Dorsolateral prefrontal cortex (tissue), 120 donors: ENCODE measurements at regions of chr13 and their contacts with region 1.

Region 1: DNA sequence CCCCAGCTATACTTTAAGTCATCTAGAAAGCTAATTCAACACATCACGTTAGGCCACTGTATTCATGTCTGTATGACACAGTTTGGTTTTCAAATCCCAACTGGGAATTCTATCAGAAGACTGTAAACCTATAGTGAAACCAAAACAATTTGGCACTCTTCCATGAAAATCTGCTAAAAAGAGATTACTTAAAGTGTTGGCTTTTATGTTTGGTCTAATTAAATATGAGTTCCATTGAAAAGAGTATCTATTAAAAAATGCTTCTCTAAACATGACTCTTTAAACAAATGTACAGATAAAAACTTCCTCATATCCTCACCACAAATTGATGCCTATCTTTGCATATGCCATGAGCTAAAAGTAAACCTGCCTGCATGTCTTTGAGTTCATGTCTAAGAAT is 25.4 kb downstream of the PCDH9 start:
- DNase-seq: no peak
- H3K4me3 ChIP-seq: peak overlapping the region in 5 of 59 donors; percentile 4 to 27 (median 8)
- H3K27ac ChIP-seq: peak overlapping the region in 27 of 59 donors; percentile 4 to 66 (median 23)
- H3K27me3 ChIP-seq: no peaks in the 10 kb centered on the region
- CTCF ChIP-seq: no peak

Region 2: GRCh38 chr13:67061750-67062149 is 143.0 kb before region 1 on chr13:
- intact Hi-C with region 1: no loop called
- DNase-seq: no peak
- H3K4me3 ChIP-seq: peak overlapping the region in 41 of 59 donors; percentile 1 to 51 (median 21)
- H3K27ac ChIP-seq: peak overlapping the region in 58 of 59 donors; percentile 14 to 100 (median 80)
- H3K27me3 ChIP-seq: no peaks in the 10 kb centered on the region
- CTCF ChIP-seq: no peak

Region 3: GRCh38 chr13:67119481-67119883 is 85.3 kb before region 1 on chr13:
- intact Hi-C with region 1: no loop called
- DNase-seq: no peak
- H3K4me3 ChIP-seq: peak overlapping the region in 3 of 59 donors; percentile 1 to 15 (median 8)
- H3K27ac ChIP-seq: peak overlapping the region in 52 of 59 donors; percentile 7 to 88 (median 74)
- H3K27me3 ChIP-seq: no peaks in the 10 kb centered on the region
- CTCF ChIP-seq: no peak

Region 4: DNA sequence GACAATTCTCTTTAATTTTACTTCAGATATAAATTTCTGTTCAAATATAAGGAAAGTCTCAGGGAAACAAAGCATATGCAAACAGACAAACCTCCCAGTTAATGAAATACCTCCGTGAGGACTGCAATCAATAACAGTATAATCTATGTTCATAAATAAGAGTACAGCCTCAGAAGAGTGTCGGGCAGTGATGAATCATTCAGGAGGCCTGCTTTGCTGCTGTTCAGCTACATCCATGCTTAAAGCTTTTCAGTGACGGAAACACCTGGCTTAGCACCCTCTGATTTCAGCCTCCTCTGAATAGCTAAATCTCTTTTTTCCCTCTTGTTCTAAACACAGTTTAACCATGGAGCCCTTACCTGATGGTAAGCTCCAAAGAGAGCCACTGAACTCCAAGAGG is 43.6 kb before region 1 on chr13:
- intact Hi-C with region 1: loop called in 1 of 2 experiments (anchors 5 kb)
- DNase-seq: no peak
- H3K4me3 ChIP-seq: no peak overlapping the region
- H3K27ac ChIP-seq: peak overlapping the region in 55 of 59 donors; percentile 0 to 90 (median 45)
- H3K27me3 ChIP-seq: no peaks in the 10 kb centered on the region
- CTCF ChIP-seq: no peak

Region 5: GRCh38 chr13:67186995-67187569 is 17.7 kb before region 1 on chr13:
- intact Hi-C with region 1: no loop called
- DNase-seq: no peak
- H3K4me3 ChIP-seq: peak overlapping the region in 9 of 59 donors; percentile 2 to 31 (median 6)
- H3K27ac ChIP-seq: peak overlapping the region in 37 of 59 donors; percentile 1 to 78 (median 48)
- H3K27me3 ChIP-seq: no peaks in the 10 kb centered on the region
- CTCF ChIP-seq: no peak